Activated CD8-positive, alpha-beta memory T cell treated with anti-CD3 and anti-CD28 coated beads, Interleukin-2, amount 10 ng/mL, durations not matched to agents 7 days and 5 days (primary cell): ENCODE measurements at regions of chr3 and their contacts with region 1.

Region 1: GRCh38 chr3:151838583-151839312 is 24.8 kb downstream of the AADAC start:
- DNase-seq: peak; percentile 47
- ATAC-seq: peak; percentile 69
- H3K4me3 Mint-ChIP-seq: no peak overlapping the region
- H3K27ac Mint-ChIP-seq: no peak overlapping the region
- H3K4me1 Mint-ChIP-seq: no peaks in the 10 kb centered on the region
- H3K27me3 Mint-ChIP-seq: peaks cover 33% of the 10 kb centered on the region

Region 2: GRCh38 chr3:151468284-151468917 is 370.3 kb before region 1 on chr3:
- CTCF ChIA-PET with region 1: interaction called, 11 read pairs
- DNase-seq: peak; percentile 48
- ATAC-seq: peak; percentile 60
- H3K4me3 Mint-ChIP-seq: no peak overlapping the region
- H3K27ac Mint-ChIP-seq: no peak overlapping the region
- H3K4me1 Mint-ChIP-seq: no peaks in the 10 kb centered on the region
- H3K27me3 Mint-ChIP-seq: peaks cover 20% of the 10 kb centered on the region

Region 3: GRCh38 chr3:151896241-151897012 is 57.7 kb after region 1 on chr3:
- CTCF ChIA-PET with region 1: no interaction called
- DNase-seq: no peak
- ATAC-seq: peak; percentile 21
- H3K4me3 Mint-ChIP-seq: no peak overlapping the region
- H3K27ac Mint-ChIP-seq: no peak overlapping the region
- H3K4me1 Mint-ChIP-seq: peaks cover 30% of the 10 kb centered on the region
- H3K27me3 Mint-ChIP-seq: no peaks in the 10 kb centered on the region

Region 4: GRCh38 chr3:151918253-151919029 is 79.7 kb after region 1 on chr3:
- CTCF ChIA-PET with region 1: interaction called, 11 read pairs
- DNase-seq: no peak
- ATAC-seq: peak; percentile 47
- H3K4me3 Mint-ChIP-seq: no peak overlapping the region
- H3K27ac Mint-ChIP-seq: no peak overlapping the region
- H3K4me1 Mint-ChIP-seq: no peaks in the 10 kb centered on the region
- H3K27me3 Mint-ChIP-seq: peaks cover 9% of the 10 kb centered on the region

Region 5: GRCh38 chr3:152011812-152012735 is 173.3 kb after region 1 on chr3:
- CTCF ChIA-PET with region 1: no interaction called
- DNase-seq: no peak
- ATAC-seq: no peak
- H3K4me3 Mint-ChIP-seq: no peak overlapping the region
- H3K27ac Mint-ChIP-seq: no peak overlapping the region
- H3K4me1 Mint-ChIP-seq: no peaks in the 10 kb centered on the region
- H3K27me3 Mint-ChIP-seq: peaks cover 2% of the 10 kb centered on the region